Left cardiac atrium (tissue), 4 donors: ENCODE measurements at regions of chr2 and their contacts with region 1.

Region 1: DNA sequence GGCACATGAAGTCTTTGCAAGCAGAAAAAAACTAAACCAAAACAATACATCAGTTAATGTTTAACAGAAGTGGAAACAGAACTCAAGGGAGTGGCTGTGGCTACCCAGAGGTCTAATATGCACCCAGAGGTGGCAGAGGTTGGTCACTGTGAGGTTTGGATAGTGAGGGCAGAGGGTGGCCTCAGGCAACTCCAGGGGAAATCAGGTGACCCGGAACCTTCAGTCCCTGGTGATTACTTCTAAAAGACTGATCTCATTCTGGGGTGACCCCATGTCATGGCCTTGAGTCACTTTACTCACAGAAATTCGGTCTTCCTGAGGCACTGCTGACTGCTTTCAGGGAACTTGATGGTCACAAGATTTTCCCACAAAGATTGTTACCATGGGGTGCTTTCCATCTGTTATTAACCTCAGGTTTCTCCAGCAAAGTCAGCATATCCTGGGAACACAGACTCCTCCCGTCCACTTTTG is 99.4 kb downstream of the TMEM17 start:
- DNase-seq: no peak
- ATAC-seq: no peak

Region 2: DNA sequence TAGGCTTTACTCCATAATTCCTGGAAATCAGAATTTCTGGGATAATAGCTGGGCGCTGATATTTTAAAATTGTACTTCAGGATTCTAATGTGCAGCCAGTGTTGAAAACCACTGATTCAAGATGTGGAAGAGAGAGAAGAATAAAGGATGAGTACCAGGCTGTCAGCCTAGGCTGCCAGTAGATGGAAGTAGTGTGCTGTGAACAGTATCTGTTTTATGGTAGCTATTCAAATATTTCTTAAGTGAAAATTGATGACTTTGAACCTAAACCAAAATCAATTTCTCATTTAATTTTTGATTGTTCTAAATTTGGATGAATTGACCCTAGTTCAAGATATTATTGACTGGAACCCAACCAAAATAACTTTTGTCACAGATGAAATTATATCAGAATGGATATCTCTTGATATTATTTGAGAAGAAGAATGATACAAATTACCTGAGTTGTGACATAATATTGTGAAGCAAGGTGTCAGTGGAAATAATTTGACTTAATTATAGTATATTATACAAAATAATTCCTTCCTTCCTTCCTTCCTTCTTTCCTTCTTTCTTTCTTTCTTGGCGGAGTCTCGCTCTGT is 413.1 kb before region 1 on chr2:
- intact Hi-C with region 1: loop called in 1 of 2 experiments (anchors 5 kb)
- DNase-seq: no peak
- ATAC-seq: peak in 1 of 2 donors; percentile 67

Region 3: GRCh38 chr2:62306751-62307468 is 99.7 kb before region 1 on chr2:
- intact Hi-C with region 1: no loop called
- DNase-seq: no peak
- ATAC-seq: peak in 1 of 2 donors; percentile 12